ENCODE measurements at regions of chr6 and their contacts with region 1.

Region 1: GRCh38 chr6:3742426-3743344 is 8.8 kb downstream of the PXDC1 start:
- DNase-seq: peak; percentile 96
- H3K4me3 Mint-ChIP-seq: peak overlapping the region; percentile 52
- H3K27ac Mint-ChIP-seq: peak overlapping the region; percentile 34
- H3K4me1 Mint-ChIP-seq: peaks cover 9% of the 10 kb centered on the region
- H3K27me3 Mint-ChIP-seq: peaks cover 22% of the 10 kb centered on the region

Region 2: GRCh38 chr6:3887150-3887700 is 144.5 kb after region 1 on chr6:
- intact Hi-C with region 1: loop called (anchors 2 kb)
- DNase-seq: no peak
- H3K4me3 Mint-ChIP-seq: no peak overlapping the region
- H3K27ac Mint-ChIP-seq: no peak overlapping the region
- H3K4me1 Mint-ChIP-seq: no peaks in the 10 kb centered on the region
- H3K27me3 Mint-ChIP-seq: peaks cover 13% of the 10 kb centered on the region

Region 3: DNA sequence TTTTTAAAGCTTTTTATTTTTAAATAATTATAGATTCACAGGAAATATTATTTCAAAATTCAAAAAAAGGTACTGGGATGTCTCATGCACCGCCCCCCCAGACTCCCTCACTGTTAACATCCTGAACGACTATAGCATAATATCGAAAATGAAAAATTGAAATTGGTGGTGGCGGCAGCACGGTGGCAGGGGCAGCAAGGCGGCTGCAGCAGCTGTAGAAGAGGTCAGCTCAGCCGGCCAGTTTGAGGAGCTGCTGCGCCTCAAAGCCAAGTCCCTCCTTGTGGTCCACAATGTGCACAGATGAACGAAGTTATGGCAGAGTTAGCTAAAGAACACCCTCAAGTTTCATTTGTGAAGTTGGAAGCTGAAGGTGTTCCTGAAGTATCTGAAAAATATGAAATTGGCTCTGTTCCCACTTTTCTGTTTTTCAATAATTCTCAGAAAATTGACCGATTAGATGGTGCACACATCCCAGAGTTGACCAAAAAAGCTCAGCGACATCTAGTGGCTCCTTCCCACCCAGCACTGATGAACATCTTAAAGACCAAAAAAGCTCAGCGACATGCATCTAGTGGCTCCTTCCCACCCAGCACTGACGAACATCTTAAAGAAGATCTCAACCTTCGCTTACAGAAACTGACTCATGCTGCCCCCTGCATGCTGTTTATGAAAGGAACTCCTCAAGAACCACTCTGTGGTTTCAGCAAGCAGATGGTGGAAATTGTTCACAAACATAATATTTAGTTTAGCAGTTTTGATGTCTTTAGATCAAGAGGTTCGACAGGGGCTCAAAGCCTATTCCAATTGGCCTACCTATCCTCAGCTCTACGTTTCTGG is 235.4 kb after region 1 on chr6:
- intact Hi-C with region 1: loop called (anchors 1 kb)
- DNase-seq: peak; percentile 82
- H3K4me3 Mint-ChIP-seq: no peak overlapping the region
- H3K27ac Mint-ChIP-seq: no peak overlapping the region
- H3K4me1 Mint-ChIP-seq: peaks cover 2% of the 10 kb centered on the region
- H3K27me3 Mint-ChIP-seq: peaks cover 27% of the 10 kb centered on the region

Region 4: GRCh38 chr6:4008324-4009047 is 265.8 kb after region 1 on chr6:
- intact Hi-C with region 1: loop called (anchors 5 kb)
- DNase-seq: peak; percentile 72
- H3K4me3 Mint-ChIP-seq: no peak overlapping the region
- H3K27ac Mint-ChIP-seq: no peak overlapping the region
- H3K4me1 Mint-ChIP-seq: peaks cover 40% of the 10 kb centered on the region
- H3K27me3 Mint-ChIP-seq: no peaks in the 10 kb centered on the region

Region 5: DNA sequence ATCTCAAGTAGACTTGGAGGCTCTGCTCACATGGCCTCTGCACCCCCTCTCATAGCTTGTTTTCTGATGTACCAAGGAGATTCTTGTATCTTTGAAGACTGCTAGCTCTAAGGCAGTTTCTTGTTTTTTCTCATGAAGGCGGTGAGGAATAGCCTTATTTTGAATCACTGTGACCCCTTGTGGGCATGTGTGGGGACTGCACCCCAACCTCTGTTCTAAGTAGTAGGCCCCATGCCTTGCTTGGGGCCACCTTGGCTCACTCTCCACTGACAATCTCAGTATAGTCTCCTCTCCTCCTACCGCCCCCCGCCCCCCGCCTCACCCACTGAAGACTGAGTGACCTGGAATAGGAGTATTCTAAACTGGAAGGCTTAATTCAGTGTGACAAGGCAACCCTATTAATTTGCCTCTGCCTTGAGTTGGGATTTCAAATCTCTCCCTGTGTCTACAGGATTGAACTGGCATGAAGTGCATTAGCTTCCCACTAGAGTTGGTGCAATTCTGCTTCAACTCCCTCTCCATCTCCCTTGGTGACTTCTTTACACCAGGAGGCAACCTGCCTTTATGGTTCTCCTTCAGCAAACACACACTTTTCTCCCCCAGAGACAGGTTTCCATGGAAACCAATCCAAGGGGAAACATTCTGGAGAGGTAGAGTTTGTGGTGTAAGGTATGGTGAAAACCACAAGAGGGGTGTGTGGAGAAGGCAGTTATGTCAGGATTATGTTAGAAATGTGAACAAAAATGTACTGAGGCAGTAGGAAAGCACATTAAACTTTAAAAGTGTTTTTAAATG is 468.1 kb after region 1 on chr6:
- intact Hi-C with region 1: loop called (anchors 2 kb)
- DNase-seq: peak; percentile 87
- H3K4me3 Mint-ChIP-seq: no peak overlapping the region
- H3K27ac Mint-ChIP-seq: no peak overlapping the region
- H3K4me1 Mint-ChIP-seq: peaks cover 18% of the 10 kb centered on the region
- H3K27me3 Mint-ChIP-seq: peaks cover 2% of the 10 kb centered on the region

Measured in activated CD4-positive, alpha-beta T cell treated with anti-CD3 and anti-CD28 coated beads, Interleukin-2, amount 10 ng/mL, durations not matched to agents 24 days and 14 days (primary cell).